ENCODE measurements at regions of chr17 and their contacts with region 1.

Region 1: GRCh38 chr17:8922451-8922850 is 43.1 kb downstream of the PIK3R5 start:
- DNase-seq: no peak
- H3K4me3 Mint-ChIP-seq: peak overlapping the region; percentile 34
- H3K27ac Mint-ChIP-seq: peak overlapping the region; percentile 95
- H3K4me1 Mint-ChIP-seq: peaks cover 26% of the 10 kb centered on the region
- H3K27me3 Mint-ChIP-seq: no peaks in the 10 kb centered on the region

Region 2: DNA sequence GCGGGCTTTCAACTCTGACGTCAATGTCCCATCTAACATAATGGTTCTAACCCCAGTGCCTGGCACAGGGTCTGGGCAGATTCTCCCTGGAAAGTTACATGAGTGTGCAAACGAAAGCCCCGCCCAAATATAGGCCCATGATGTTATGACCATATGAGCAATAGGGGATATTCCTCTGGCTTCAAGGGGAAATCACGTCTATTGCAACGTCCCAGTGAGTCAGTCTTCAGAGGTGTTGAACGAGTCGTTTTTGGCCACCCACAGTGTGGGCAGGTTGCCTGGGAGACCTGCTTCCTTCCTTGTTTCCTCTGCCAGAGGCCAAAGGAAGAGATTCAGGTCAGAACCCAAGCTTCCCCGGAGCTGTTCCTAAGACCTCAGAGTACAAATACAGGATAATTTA is 12.7 kb after region 1 on chr17:
- intact Hi-C with region 1: loop called (anchors 1 kb)
- DNase-seq: no peak
- H3K4me3 Mint-ChIP-seq: peak overlapping the region; percentile 30
- H3K27ac Mint-ChIP-seq: peak overlapping the region; percentile 91
- H3K4me1 Mint-ChIP-seq: peaks cover 50% of the 10 kb centered on the region
- H3K27me3 Mint-ChIP-seq: no peaks in the 10 kb centered on the region

Measured in activated T-helper 2 cell treated with anti-CD3 and anti-CD28 coated beads, Interferon-gamma antibody, Interleukin-2, Interleukin-4, amounts not matched to agents 10 μg/mL and 5 μg/mL and 100 μg/mL, durations not matched to agents 14 hours and 24 hours and 36 hours (primary cell).